ENCODE measurements at regions of chr3 and their contacts with region 1.

Region 1: DNA sequence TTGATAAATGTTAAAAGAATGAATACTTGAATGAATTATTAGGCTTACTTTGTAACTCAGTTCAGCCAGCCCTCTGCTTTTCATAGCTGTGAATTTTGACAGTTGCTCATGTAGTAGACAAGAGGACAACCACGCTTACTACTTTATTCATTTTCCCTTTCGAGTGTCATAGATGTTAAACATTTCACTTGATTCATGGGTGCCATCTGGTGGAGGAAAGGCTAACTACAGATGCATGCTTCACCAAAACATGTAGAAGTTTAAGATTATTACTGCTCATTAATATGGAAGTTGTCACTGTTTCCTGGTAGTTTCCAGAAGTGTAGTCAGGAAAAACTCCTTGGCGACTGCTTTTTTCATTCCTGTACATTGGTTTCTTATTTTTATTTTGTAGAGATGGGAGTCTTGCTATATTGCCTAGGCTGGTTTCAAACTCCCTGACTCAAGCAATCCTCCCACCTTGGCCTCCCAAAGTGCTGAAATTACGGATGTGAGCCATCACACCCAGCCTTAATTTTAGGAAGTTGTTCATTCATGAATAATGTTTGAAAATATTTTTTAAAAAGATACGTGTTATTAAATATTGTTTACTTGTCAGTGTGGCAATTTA is 163.2 kb downstream of the B3GALNT1 start:
- DNase-seq: peak; percentile 50 to 77 (median 70)
- ATAC-seq: peak; percentile 66
- H3K4me3 ChIP-seq: no peak overlapping the region
- H3K4me3 Mint-ChIP-seq: no peak overlapping the region
- H3K27ac ChIP-seq: no peak overlapping the region
- H3K27ac Mint-ChIP-seq: no peak overlapping the region
- H3K4me1 ChIP-seq: no peaks in the 10 kb centered on the region
- H3K4me1 Mint-ChIP-seq: peaks cover 3% of the 10 kb centered on the region
- H3K27me3 ChIP-seq: no peaks in the 10 kb centered on the region
- H3K27me3 Mint-ChIP-seq: no peaks in the 10 kb centered on the region
- CTCF ChIP-seq: peak; percentile 84

Region 2: GRCh38 chr3:159884661-159885402 is 1057.2 kb before region 1 on chr3:
- CTCF ChIA-PET with region 1: no interaction called
- POLR2A ChIA-PET with region 1: no interaction called
- intact Hi-C with region 1: loop called in 1 of 2 experiments (anchors 10 kb)
- DNase-seq: peak in 2 of 9 experiments; percentile 22 to 33
- ATAC-seq: no peak
- H3K4me3 ChIP-seq: no peak overlapping the region
- H3K4me3 Mint-ChIP-seq: no peak overlapping the region
- H3K27ac ChIP-seq: no peak overlapping the region
- H3K27ac Mint-ChIP-seq: no peak overlapping the region
- H3K4me1 ChIP-seq: no peaks in the 10 kb centered on the region
- H3K4me1 Mint-ChIP-seq: no peaks in the 10 kb centered on the region
- H3K27me3 ChIP-seq: no peaks in the 10 kb centered on the region
- H3K27me3 Mint-ChIP-seq: peaks cover 3% of the 10 kb centered on the region
- CTCF ChIP-seq: no peak

Region 3: DNA sequence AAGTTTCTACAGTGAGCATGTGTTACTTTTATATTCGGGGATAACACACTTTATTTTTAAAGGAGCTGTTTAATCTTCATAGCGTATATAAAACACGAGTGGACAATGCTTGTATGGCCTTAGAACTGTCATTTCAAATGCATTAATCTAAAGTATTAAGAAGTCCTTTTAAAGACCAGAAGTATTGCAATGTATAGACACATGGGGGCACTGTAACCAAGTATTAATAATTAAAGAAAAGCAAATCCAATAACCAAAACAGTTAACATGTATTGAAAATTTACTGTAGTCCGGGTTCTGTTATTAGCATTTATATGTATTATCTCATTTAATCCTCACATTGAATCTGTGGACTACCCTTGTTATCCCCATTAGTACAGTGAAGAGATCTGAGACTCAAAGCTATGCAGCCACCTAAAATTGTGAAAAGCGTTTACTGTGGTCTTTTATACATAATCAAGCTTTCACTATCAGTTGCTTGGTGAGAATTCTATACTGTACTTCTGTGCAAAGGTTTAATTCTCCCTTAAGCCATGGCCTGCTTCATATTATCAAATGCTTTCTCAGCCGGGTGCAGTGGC is 254.9 kb before region 1 on chr3:
- CTCF ChIA-PET with region 1: interaction called, 14 read pairs
- POLR2A ChIA-PET with region 1: no interaction called
- intact Hi-C with region 1: loop called (anchors 1 to 2 kb)
- DNase-seq: peak in 2 of 9 experiments; percentile 17 to 35
- ATAC-seq: no peak
- H3K4me3 ChIP-seq: no peak overlapping the region
- H3K4me3 Mint-ChIP-seq: no peak overlapping the region
- H3K27ac ChIP-seq: no peak overlapping the region
- H3K27ac Mint-ChIP-seq: no peak overlapping the region
- H3K4me1 ChIP-seq: no peaks in the 10 kb centered on the region
- H3K4me1 Mint-ChIP-seq: no peaks in the 10 kb centered on the region
- H3K27me3 ChIP-seq: no peaks in the 10 kb centered on the region
- H3K27me3 Mint-ChIP-seq: peaks cover 6% of the 10 kb centered on the region
- CTCF ChIP-seq: peak; percentile 45

Region 4: DNA sequence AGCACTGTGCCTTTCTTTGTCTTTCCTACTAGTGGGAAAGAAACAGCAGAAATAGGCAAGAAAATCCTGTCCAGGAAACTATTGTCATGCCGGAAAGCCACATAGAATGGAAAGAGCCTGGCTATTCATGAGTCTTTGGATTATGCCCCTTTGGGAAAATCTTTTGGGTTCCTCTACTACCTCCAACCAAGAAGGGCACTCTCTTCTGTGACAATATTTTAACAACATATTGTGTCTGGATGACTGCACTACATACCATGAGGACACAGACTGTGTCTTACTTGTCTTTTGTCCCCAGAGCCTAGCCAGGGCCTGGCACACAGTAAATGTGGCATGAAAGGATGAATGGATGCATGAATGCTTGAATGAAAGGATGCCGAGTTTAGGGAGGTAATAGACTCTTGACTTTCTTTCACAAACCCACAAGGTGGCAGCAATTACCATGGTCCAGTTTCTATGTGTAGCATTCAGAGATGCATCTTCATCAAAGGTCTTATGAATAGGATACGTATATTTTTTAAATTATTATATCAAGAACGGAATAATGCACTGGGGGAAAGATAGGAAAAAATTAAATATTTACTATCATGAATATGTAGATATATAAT is 234.7 kb before region 1 on chr3:
- CTCF ChIA-PET with region 1: interaction called, 45 read pairs
- POLR2A ChIA-PET with region 1: no interaction called
- intact Hi-C with region 1: loop called (anchors 1 kb)
- DNase-seq: peak in 6 of 9 experiments; percentile 3 to 75 (median 23)
- ATAC-seq: peak; percentile 49
- H3K4me3 ChIP-seq: no peak overlapping the region
- H3K4me3 Mint-ChIP-seq: no peak overlapping the region
- H3K27ac ChIP-seq: no peak overlapping the region
- H3K27ac Mint-ChIP-seq: no peak overlapping the region
- H3K4me1 ChIP-seq: no peaks in the 10 kb centered on the region
- H3K4me1 Mint-ChIP-seq: no peaks in the 10 kb centered on the region
- H3K27me3 ChIP-seq: peaks cover 0 to 4% of the 10 kb centered on the region in 2 experiments
- H3K27me3 Mint-ChIP-seq: peaks cover 29% of the 10 kb centered on the region
- CTCF ChIP-seq: peak; percentile 65

Region 5: GRCh38 chr3:160720123-160720746 is 221.8 kb before region 1 on chr3:
- CTCF ChIA-PET with region 1: interaction called, 12 read pairs
- POLR2A ChIA-PET with region 1: no interaction called
- intact Hi-C with region 1: no loop called
- DNase-seq: peak in 1 of 9 experiments; percentile 4
- ATAC-seq: no peak
- H3K4me3 ChIP-seq: no peak overlapping the region
- H3K4me3 Mint-ChIP-seq: no peak overlapping the region
- H3K27ac ChIP-seq: no peak overlapping the region
- H3K27ac Mint-ChIP-seq: no peak overlapping the region
- H3K4me1 ChIP-seq: no peaks in the 10 kb centered on the region
- H3K4me1 Mint-ChIP-seq: no peaks in the 10 kb centered on the region
- H3K27me3 ChIP-seq: no peaks in the 10 kb centered on the region
- H3K27me3 Mint-ChIP-seq: no peaks in the 10 kb centered on the region
- CTCF ChIP-seq: no peak

Region 6: GRCh38 chr3:160929595-160929994 is 12.4 kb before region 1 on chr3:
- CTCF ChIA-PET with region 1: interaction called, 19 read pairs
- POLR2A ChIA-PET with region 1: no interaction called
- intact Hi-C with region 1: no loop called
- DNase-seq: no peak
- ATAC-seq: no peak
- H3K4me3 ChIP-seq: no peak overlapping the region
- H3K4me3 Mint-ChIP-seq: no peak overlapping the region
- H3K27ac ChIP-seq: no peak overlapping the region
- H3K27ac Mint-ChIP-seq: no peak overlapping the region
- H3K4me1 ChIP-seq: no peaks in the 10 kb centered on the region
- H3K4me1 Mint-ChIP-seq: no peaks in the 10 kb centered on the region
- H3K27me3 ChIP-seq: no peaks in the 10 kb centered on the region
- H3K27me3 Mint-ChIP-seq: peaks cover 4% of the 10 kb centered on the region
- CTCF ChIP-seq: no peak

Region 7: GRCh38 chr3:160968761-160969160 is 26.8 kb after region 1 on chr3:
- CTCF ChIA-PET with region 1: no interaction called
- POLR2A ChIA-PET with region 1: no interaction called
- intact Hi-C with region 1: no loop called
- DNase-seq: no peak
- ATAC-seq: no peak
- H3K4me3 ChIP-seq: no peak overlapping the region
- H3K4me3 Mint-ChIP-seq: no peak overlapping the region
- H3K27ac ChIP-seq: no peak overlapping the region
- H3K27ac Mint-ChIP-seq: no peak overlapping the region
- H3K4me1 ChIP-seq: peaks cover 5% of the 10 kb centered on the region
- H3K4me1 Mint-ChIP-seq: peaks cover 8% of the 10 kb centered on the region
- H3K27me3 ChIP-seq: no peaks in the 10 kb centered on the region
- H3K27me3 Mint-ChIP-seq: no peaks in the 10 kb centered on the region
- CTCF ChIP-seq: no peak

Region 8: GRCh38 chr3:161153480-161153879 is 211.5 kb after region 1 on chr3:
- CTCF ChIA-PET with region 1: no interaction called
- POLR2A ChIA-PET with region 1: no interaction called
- intact Hi-C with region 1: no loop called
- DNase-seq: no peak
- ATAC-seq: no peak
- H3K4me3 ChIP-seq: no peak overlapping the region
- H3K4me3 Mint-ChIP-seq: no peak overlapping the region
- H3K27ac ChIP-seq: no peak overlapping the region
- H3K27ac Mint-ChIP-seq: no peak overlapping the region
- H3K4me1 ChIP-seq: no peaks in the 10 kb centered on the region
- H3K4me1 Mint-ChIP-seq: no peaks in the 10 kb centered on the region
- H3K27me3 ChIP-seq: no peaks in the 10 kb centered on the region
- H3K27me3 Mint-ChIP-seq: no peaks in the 10 kb centered on the region
- CTCF ChIP-seq: no peak

Region 9: GRCh38 chr3:161310649-161311423 is 368.8 kb after region 1 on chr3:
- CTCF ChIA-PET with region 1: no interaction called
- POLR2A ChIA-PET with region 1: no interaction called
- intact Hi-C with region 1: no loop called
- DNase-seq: peak; percentile 3 to 88 (median 42)
- ATAC-seq: peak; percentile 76
- H3K4me3 ChIP-seq: no peak overlapping the region
- H3K4me3 Mint-ChIP-seq: peak overlapping the region; percentile 58
- H3K27ac ChIP-seq: peak overlapping the region in 1 of 2 experiments; percentile 38
- H3K27ac Mint-ChIP-seq: peak overlapping the region; percentile 85
- H3K4me1 ChIP-seq: peaks cover 47% of the 10 kb centered on the region
- H3K4me1 Mint-ChIP-seq: peaks cover 64% of the 10 kb centered on the region
- H3K27me3 ChIP-seq: peaks cover 0 to 4% of the 10 kb centered on the region in 2 experiments
- H3K27me3 Mint-ChIP-seq: no peaks in the 10 kb centered on the region
- CTCF ChIP-seq: no peak

Region 10: DNA sequence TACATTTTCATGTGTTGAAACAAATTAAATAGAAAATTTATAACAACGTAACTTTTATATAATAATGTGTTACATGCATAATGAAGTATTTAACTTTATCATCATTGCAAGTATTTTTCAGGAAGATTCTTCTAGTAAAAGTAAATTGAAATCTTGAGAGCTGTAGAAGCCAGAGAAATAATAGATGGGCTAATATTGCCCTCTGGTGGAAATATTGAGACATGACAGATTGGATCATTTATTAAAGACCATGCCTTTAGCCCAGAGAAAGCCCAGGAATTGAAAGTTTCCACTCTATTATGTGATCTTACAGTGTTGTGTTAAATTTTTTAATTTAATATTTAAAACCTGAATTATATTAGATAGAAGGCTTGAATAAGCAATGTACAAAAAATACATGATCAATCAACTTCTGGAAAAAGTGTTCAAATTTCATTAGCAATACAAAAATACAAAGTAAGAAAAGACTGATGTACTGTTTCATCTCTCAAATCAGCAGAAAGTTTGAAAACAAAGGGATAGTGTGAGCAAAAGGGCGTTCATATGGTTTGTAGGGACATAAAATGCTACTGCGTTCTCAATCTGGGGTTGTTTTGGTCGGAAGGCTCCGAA is 482.0 kb after region 1 on chr3:
- CTCF ChIA-PET with region 1: interaction called, 4 read pairs
- POLR2A ChIA-PET with region 1: no interaction called
- intact Hi-C with region 1: loop called (anchors 1 to 5 kb)
- DNase-seq: peak in 2 of 9 experiments; percentile 55 to 63
- ATAC-seq: peak; percentile 57
- H3K4me3 ChIP-seq: no peak overlapping the region
- H3K4me3 Mint-ChIP-seq: no peak overlapping the region
- H3K27ac ChIP-seq: no peak overlapping the region
- H3K27ac Mint-ChIP-seq: no peak overlapping the region
- H3K4me1 ChIP-seq: no peaks in the 10 kb centered on the region
- H3K4me1 Mint-ChIP-seq: no peaks in the 10 kb centered on the region
- H3K27me3 ChIP-seq: no peaks in the 10 kb centered on the region
- H3K27me3 Mint-ChIP-seq: peaks cover 5% of the 10 kb centered on the region
- CTCF ChIP-seq: peak; percentile 78

Measured in CD8-positive, alpha-beta T cell (primary cell).